Psoas muscle (tissue), 8 donors: ENCODE measurements at regions of chr17 and their contacts with region 1.

Region 1: DNA sequence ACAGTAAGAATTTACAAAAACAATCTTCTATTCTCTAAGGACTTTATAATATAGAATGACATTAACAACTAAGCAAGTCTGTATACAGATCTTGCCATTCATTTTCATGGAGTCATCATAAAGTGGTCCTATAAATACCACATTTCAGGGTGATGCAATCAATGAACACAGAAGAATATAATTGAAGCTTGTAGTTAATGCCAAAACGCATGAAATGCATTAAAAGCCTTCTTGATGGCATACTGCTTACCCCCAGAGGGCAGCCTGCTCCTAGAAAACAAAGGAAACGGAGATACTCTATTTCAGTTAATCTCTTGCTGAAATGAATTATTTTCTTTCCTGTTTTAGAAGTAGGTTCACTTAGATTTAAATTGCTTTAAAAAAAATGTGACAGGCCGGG is 45.2 kb upstream of the STAC2 start:
- DNase-seq: no peak
- ATAC-seq: peak in 2 of 4 donors; percentile 37 to 73
- H3K4me3 ChIP-seq: no peak overlapping the region
- H3K27ac ChIP-seq: no peak overlapping the region
- H3K4me1 ChIP-seq: no peaks in the 10 kb centered on the region
- H3K27me3 ChIP-seq: no peaks in the 10 kb centered on the region
- CTCF ChIP-seq: peak; percentile 38

Region 2: DNA sequence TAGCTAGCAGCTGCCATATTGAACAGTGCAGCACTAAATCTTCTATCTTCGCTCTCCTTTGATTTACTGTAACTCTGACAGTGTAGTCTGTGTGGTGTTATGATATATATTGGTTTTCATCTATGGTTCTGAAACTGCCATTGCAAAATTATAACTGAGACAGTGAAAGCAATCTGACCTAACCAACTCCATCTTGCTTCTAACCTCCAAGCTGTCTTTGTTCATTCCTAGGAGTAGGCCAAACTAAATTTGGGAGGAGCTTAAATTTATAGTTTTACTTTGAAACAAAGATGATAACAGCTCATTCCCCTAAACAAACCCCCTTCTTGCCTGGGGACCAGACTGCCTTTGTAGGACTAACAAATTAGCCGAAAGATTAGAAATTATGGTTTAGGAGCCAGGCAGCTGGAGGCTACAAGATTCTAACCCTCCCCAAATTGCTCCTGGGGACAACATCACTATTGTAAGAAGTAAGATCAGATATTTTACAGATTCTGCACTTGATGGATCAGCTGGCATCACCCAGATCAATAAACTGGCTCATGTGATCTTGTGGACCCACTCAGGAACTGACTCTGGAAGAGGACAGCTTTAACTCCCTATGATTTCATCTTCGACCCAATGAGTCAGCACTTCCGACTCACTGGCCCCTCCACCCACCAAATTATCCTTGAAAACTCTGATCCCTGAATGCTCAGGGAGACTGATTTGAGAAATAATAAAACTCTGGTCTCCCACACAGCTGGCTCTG is 256.7 kb before region 1 on chr17:
- intact Hi-C with region 1: no loop called
- DNase-seq: no peak
- ATAC-seq: no peak
- H3K4me3 ChIP-seq: no peak overlapping the region
- H3K27ac ChIP-seq: no peak overlapping the region
- H3K4me1 ChIP-seq: no peaks in the 10 kb centered on the region
- H3K27me3 ChIP-seq: no peaks in the 10 kb centered on the region
- CTCF ChIP-seq: no peak

Region 3: DNA sequence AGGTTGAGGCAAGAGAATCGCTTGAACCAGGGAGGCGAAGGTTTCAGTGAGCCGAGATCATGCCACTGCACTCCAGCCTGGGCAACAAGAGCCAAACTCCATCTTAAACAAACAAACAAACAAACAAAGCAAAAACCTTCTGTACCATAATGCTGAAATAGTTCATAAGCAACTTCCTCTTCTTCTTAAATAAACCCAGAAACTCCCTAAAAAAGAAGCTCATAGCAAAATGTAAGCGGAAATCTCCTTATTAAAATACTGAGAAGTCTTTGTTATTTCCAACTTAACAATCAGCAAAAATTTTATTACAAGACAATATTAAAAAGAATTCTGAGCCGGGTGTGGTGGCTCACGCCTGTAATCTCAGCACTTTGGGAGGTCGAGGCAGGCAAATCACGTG is 47.7 kb after region 1 on chr17:
- intact Hi-C with region 1: loop called in 1 of 2 experiments (anchors 2 kb)
- DNase-seq: no peak
- ATAC-seq: no peak
- H3K4me3 ChIP-seq: no peak overlapping the region
- H3K27ac ChIP-seq: no peak overlapping the region
- H3K4me1 ChIP-seq: no peaks in the 10 kb centered on the region
- H3K27me3 ChIP-seq: no peaks in the 10 kb centered on the region
- CTCF ChIP-seq: no peak

Region 4: DNA sequence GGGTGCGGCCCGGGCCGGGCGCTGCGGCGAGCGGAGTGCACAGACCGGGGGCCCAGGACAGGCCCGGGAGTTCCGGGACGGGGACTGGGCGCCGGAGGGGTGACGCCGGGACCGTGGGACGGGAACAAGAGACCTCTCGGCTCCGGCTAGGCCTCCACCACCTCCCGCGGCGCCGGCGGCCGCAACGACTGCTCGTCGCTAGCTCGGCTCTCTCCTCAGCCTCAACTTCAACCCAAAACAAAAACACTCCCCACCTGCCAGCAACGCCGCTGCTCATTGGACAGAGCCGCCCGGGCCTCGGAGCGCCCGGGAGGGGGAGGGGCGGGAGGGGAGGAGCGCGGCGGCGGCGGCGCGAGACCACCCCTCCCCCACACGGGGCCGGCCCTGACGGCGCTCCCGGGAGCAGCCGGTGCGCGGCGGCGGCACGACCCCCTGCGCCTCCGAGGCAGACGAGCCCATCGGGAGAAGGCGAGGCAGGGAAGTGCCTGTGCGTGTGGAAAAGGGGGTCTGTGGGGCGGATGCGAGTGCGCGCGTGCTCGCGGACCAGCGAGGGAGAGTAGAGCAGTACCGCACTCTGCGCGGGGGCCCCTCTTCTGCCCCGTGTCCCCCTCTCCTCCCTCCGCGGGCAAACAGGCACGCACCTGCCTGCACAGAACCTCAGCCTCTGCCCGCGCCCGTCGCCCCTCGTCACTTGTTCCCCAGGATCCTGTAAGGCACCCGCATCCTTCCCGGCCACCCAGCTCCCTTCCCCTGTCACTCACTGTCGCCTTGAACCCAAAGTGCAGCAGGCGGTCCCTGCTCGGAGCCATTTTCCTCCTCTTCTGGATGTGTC is 130.7 kb after region 1 on chr17 and contains the start of gene FBXL20:
- intact Hi-C with region 1: loop called (anchors 5 to 10 kb)
- DNase-seq: peak; percentile 95 to 97
- ATAC-seq: peak; percentile 93 to 95 (median 94)
- H3K4me3 ChIP-seq: peak within 1 kb of the TSS; percentile 81
- H3K27ac ChIP-seq: peak within 1 kb of the TSS; percentile 84
- H3K4me1 ChIP-seq: peaks cover 24% of the 10 kb centered on the region
- H3K27me3 ChIP-seq: no peaks in the 10 kb centered on the region
- CTCF ChIP-seq: no peak
- total RNA-seq, gene FBXL20: 8.0 to 8.7 (median 8.2) TPM